ENCODE measurements at regions of chr12 and their contacts with region 1.

Region 1: GRCh38 chr12:93279565-93280412 is 97.9 kb upstream of the NUDT4 start:
- DNase-seq: no peak
- H3K4me3 Mint-ChIP-seq: no peak overlapping the region
- H3K27ac Mint-ChIP-seq: no peak overlapping the region
- H3K4me1 Mint-ChIP-seq: no peaks in the 10 kb centered on the region
- H3K27me3 Mint-ChIP-seq: no peaks in the 10 kb centered on the region

Region 2: GRCh38 chr12:93256256-93256969 is 23.4 kb before region 1 on chr12:
- intact Hi-C with region 1: no loop called
- DNase-seq: no peak
- H3K4me3 Mint-ChIP-seq: no peak overlapping the region
- H3K27ac Mint-ChIP-seq: no peak overlapping the region
- H3K4me1 Mint-ChIP-seq: no peaks in the 10 kb centered on the region
- H3K27me3 Mint-ChIP-seq: peaks cover 3% of the 10 kb centered on the region

Region 3: GRCh38 chr12:93311827-93312226 is 32.0 kb after region 1 on chr12:
- intact Hi-C with region 1: loop called (anchors 5 kb)
- DNase-seq: no peak
- H3K4me3 Mint-ChIP-seq: no peak overlapping the region
- H3K27ac Mint-ChIP-seq: no peak overlapping the region
- H3K4me1 Mint-ChIP-seq: no peaks in the 10 kb centered on the region
- H3K27me3 Mint-ChIP-seq: peaks cover under 1% of the 10 kb centered on the region

Measured in activated T-helper 2 cell treated with anti-CD3 and anti-CD28 coated beads, Interferon-gamma antibody, Interleukin-2, Interleukin-4, amounts not matched to agents 10 μg/mL and 5 μg/mL and 100 μg/mL, durations not matched to agents 14 hours and 24 hours and 36 hours (primary cell).